Aorta (tissue), 5 donors: ENCODE measurements at regions of chr5 and their contacts with region 1.

Region 1: DNA sequence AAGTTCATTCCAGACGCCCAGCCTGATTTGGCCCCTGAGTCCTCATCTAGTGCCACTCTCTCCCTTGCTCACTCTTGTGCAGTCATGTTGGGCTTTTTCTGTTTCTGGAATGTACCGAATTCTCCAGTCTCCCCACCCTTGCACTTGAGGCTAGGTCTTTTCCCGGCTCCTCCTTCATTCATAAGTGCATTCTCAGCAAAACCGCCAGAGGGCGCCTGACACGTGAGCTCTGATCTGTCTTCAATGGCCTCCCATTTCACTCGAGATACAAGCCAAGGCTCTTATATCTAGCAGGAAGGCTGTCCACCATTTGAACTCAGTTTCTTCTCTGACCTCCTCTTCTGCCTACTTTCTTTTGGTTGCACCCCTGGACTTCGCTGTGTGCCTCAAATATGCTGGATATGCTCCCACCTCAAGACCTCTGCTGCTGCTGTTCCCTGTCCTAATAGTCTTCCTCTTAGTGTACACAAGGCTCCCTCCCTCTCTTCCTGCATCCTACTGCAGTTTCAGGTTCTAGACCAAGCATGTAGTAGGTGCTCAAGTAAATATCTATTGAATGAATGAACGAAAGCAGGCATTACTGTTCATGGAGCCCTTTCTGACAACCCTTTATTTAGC is 568.1 kb upstream of the WWC1 start:
- DNase-seq: peak; percentile 63 to 87
- ATAC-seq: peak; percentile 89
- H3K4me3 ChIP-seq: no peak overlapping the region
- H3K27ac ChIP-seq: no peak overlapping the region
- H3K4me1 ChIP-seq: no peaks in the 10 kb centered on the region
- H3K27me3 ChIP-seq: no peaks in the 10 kb centered on the region

Region 2: GRCh38 chr5:167608390-167609272 is 114.7 kb before region 1 on chr5:
- intact Hi-C with region 1: no loop called
- DNase-seq: no peak
- ATAC-seq: no peak
- H3K4me3 ChIP-seq: no peak overlapping the region
- H3K27ac ChIP-seq: no peak overlapping the region
- H3K4me1 ChIP-seq: no peaks in the 10 kb centered on the region
- H3K27me3 ChIP-seq: no peaks in the 10 kb centered on the region

Region 3: DNA sequence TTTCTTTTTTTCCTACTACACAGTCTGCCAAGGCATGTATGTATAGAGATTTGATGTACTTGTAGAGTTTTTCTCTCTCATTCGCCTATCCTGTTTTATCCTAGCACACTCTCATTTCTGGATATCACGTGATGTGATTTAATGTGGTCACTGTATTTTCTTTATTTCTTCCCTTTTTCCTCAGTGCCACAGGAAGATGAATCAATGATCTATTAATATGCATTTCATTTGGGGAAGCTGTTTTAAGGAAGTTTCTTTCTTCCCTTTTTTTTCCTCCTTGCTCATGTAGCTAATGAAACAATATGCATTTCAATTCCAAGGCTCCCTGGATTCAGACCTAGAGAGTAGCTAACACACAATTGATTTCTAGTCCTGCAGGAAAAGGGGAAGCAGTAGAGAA is 61.7 kb after region 1 on chr5:
- intact Hi-C with region 1: loop called in 1 of 2 experiments (anchors 5 kb)
- DNase-seq: no peak
- ATAC-seq: no peak
- H3K4me3 ChIP-seq: no peak overlapping the region
- H3K27ac ChIP-seq: no peak overlapping the region
- H3K4me1 ChIP-seq: no peaks in the 10 kb centered on the region
- H3K27me3 ChIP-seq: no peaks in the 10 kb centered on the region

Region 4: GRCh38 chr5:167853421-167853820 is 130.1 kb after region 1 on chr5:
- intact Hi-C with region 1: loop called in 1 of 2 experiments (anchors 10 kb)
- DNase-seq: no peak
- ATAC-seq: no peak
- H3K4me3 ChIP-seq: no peak overlapping the region
- H3K27ac ChIP-seq: no peak overlapping the region
- H3K4me1 ChIP-seq: peaks cover 0 to 10% of the 10 kb centered on the region in 2 donors
- H3K27me3 ChIP-seq: no peaks in the 10 kb centered on the region

Region 5: GRCh38 chr5:168020542-168021294 is 297.4 kb after region 1 on chr5:
- intact Hi-C with region 1: loop called (anchors 1 to 2 kb)
- DNase-seq: no peak
- ATAC-seq: no peak
- H3K4me3 ChIP-seq: no peak overlapping the region
- H3K27ac ChIP-seq: no peak overlapping the region
- H3K4me1 ChIP-seq: no peaks in the 10 kb centered on the region
- H3K27me3 ChIP-seq: no peaks in the 10 kb centered on the region

Region 6: GRCh38 chr5:168219515-168220410 is 496.4 kb after region 1 on chr5:
- intact Hi-C with region 1: loop called (anchors 2 to 5 kb)
- DNase-seq: no peak
- ATAC-seq: peak; percentile 82
- H3K4me3 ChIP-seq: no peak overlapping the region
- H3K27ac ChIP-seq: no peak overlapping the region
- H3K4me1 ChIP-seq: no peaks in the 10 kb centered on the region
- H3K27me3 ChIP-seq: no peaks in the 10 kb centered on the region